ENCODE measurements at regions of chr16 and their contacts with region 1.

Region 1: GRCh38 chr16:66608241-66609138 is 4.0 kb downstream of the CMTM3 start:
- DNase-seq: peak; percentile 74
- ATAC-seq: peak; percentile 76
- H3K4me3 ChIP-seq: peak overlapping the region in 1 of 2 experiments; percentile 7; a peak in 1 of 4 replicates
- H3K27ac ChIP-seq: peak overlapping the region; percentile 54
- H3K4me1 ChIP-seq: peaks cover 24 to 39% of the 10 kb centered on the region in 2 experiments
- H3K27me3 ChIP-seq: no peaks in the 10 kb centered on the region
- CTCF ChIP-seq: peak; percentile 89 to 97 (median 96)
- POLR2A ChIP-seq: no peak
- RAD21 ChIP-seq: peak; percentile 91

Region 2: DNA sequence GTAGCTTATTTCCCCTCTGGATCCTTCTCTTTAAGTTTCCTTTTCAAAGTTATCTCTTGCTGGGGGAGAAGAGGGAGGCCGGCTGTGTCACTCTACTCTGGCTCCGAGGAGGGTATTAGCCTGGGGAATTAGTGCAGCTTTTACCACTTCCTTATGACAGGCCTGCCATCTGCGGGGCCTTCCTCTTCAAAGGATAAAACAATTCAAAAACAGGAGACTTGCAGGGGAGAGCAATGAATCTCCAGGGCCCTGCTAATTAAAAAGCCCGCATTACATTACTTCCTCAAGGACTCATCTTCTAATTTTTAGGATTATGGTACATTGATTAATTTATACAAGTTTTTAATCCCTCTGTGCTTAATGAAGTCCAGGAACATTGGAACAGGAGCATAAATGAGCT is 432.9 kb before region 1 on chr16:
- CTCF ChIA-PET with region 1: no interaction called
- POLR2A ChIA-PET with region 1: no interaction called
- RAD21 ChIA-PET with region 1: no interaction called
- intact Hi-C with region 1: no loop called
- DNase-seq: no peak
- ATAC-seq: no peak
- H3K4me3 ChIP-seq: no peak overlapping the region
- H3K27ac ChIP-seq: no peak overlapping the region
- H3K4me1 ChIP-seq: no peaks in the 10 kb centered on the region
- H3K27me3 ChIP-seq: peaks cover 6% of the 10 kb centered on the region; the same call in 1 of the 2 replicates
- CTCF ChIP-seq: no peak
- POLR2A ChIP-seq: no peak
- RAD21 ChIP-seq: no peak

Region 3: GRCh38 chr16:66521951-66522771 is 86.3 kb before region 1 on chr16:
- CTCF ChIA-PET with region 1: interaction called, 10 read pairs
- POLR2A ChIA-PET with region 1: no interaction called
- RAD21 ChIA-PET with region 1: no interaction called
- intact Hi-C with region 1: no loop called
- DNase-seq: peak; percentile 90
- ATAC-seq: peak; percentile 94
- H3K4me3 ChIP-seq: peak overlapping the region in 1 of 2 experiments; percentile 33; a peak in 1 of 4 replicates
- H3K27ac ChIP-seq: peak overlapping the region; percentile 58
- H3K4me1 ChIP-seq: peaks cover 38 to 46% of the 10 kb centered on the region in 2 experiments
- H3K27me3 ChIP-seq: no peaks in the 10 kb centered on the region
- CTCF ChIP-seq: no peak
- POLR2A ChIP-seq: no peak
- RAD21 ChIP-seq: no peak

Region 4: DNA sequence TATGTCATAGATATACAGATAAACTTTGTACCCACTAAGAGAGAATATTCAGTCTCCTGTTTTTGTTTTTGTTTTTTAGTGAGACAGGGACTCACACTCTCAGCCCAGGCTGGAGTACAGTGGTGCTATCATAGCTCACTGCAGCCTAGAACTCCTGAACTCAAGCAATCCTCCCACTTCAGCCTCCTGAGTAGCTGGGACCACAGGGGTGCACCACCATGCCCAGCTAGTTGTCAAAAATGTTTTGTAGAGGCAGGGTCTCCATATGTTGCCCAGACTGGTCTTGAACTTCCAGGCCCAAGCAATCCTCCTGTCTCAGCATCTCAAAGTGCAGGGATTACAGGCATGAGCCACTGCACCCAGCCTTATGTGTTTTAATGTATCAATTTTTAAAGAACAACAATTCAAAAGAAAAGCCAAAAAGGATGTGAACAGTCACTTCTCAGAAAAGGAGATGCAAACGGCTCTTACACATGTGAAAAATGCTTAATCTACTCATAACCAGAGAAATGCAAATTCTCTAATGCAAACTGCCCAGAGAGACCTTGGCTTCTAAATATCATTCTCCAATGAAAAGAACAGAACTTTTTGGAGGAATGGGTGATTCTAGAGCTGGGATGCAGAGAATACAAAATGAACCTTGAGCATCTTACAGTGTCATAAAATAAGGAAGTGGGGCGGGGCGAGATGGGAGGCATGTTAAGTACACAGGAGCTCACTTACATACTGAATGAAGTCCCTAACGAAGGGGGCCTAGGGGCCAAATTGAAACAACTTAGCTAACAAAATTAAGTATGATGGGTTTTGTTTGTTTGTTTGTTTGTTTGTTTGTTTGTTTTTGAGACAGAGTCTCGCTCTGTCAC is 11.3 kb before region 1 on chr16:
- CTCF ChIA-PET with region 1: interaction called, 11 read pairs
- POLR2A ChIA-PET with region 1: no interaction called
- RAD21 ChIA-PET with region 1: no interaction called
- intact Hi-C with region 1: no loop called
- DNase-seq: no peak
- ATAC-seq: no peak
- H3K4me3 ChIP-seq: no peak overlapping the region
- H3K27ac ChIP-seq: no peak overlapping the region
- H3K4me1 ChIP-seq: no peaks in the 10 kb centered on the region
- H3K27me3 ChIP-seq: no peaks in the 10 kb centered on the region
- CTCF ChIP-seq: no peak
- POLR2A ChIP-seq: no peak
- RAD21 ChIP-seq: no peak

Region 5: DNA sequence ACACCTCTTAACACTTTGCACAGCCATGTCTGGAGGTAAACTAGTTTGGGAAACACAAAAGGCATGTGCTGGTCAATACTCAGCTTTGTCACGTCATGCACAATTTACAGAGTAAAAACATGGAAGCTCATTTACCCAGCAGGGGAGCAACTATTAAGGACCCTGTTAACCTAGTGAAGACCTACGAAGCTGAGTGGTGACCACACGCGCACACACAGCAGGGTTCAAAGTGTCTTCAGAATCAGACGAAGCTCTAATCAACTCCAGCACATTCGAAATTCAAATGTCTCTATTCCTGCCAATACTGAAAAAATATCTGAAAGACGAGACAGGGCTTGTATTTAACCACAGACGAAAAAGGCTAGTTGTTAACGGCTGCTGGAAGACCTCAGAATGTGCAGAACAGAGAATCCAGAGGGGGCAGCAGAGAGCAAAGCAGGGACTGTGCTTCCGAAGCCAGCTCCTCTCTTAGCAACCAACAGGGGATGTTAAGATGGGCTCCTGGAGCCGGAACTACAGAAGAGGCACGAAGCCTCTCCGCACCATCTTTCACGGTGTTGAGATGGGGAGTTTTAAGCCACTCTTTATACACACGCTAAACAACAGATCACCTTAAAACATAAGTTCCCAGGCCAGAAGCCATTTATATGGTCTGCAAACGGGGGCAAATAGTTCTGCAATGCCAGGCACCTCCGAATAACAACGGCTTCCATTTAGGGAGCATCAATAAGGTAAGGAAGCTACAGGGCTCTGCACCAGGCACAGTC is 42.4 kb after region 1 on chr16:
- CTCF ChIA-PET with region 1: interaction called, 11 read pairs
- POLR2A ChIA-PET with region 1: no interaction called
- RAD21 ChIA-PET with region 1: no interaction called
- intact Hi-C with region 1: no loop called
- DNase-seq: peak; percentile 60
- ATAC-seq: peak; percentile 100
- H3K4me3 ChIP-seq: no peak overlapping the region
- H3K27ac ChIP-seq: no peak overlapping the region
- H3K4me1 ChIP-seq: peaks cover 0 to 8% of the 10 kb centered on the region in 2 experiments; a peak in 3 of 4 replicates
- H3K27me3 ChIP-seq: no peaks in the 10 kb centered on the region
- CTCF ChIP-seq: peak; percentile 65 to 94 (median 89); a peak in 5 of 6 replicates
- POLR2A ChIP-seq: no peak
- RAD21 ChIP-seq: peak; percentile 57

Region 6: DNA sequence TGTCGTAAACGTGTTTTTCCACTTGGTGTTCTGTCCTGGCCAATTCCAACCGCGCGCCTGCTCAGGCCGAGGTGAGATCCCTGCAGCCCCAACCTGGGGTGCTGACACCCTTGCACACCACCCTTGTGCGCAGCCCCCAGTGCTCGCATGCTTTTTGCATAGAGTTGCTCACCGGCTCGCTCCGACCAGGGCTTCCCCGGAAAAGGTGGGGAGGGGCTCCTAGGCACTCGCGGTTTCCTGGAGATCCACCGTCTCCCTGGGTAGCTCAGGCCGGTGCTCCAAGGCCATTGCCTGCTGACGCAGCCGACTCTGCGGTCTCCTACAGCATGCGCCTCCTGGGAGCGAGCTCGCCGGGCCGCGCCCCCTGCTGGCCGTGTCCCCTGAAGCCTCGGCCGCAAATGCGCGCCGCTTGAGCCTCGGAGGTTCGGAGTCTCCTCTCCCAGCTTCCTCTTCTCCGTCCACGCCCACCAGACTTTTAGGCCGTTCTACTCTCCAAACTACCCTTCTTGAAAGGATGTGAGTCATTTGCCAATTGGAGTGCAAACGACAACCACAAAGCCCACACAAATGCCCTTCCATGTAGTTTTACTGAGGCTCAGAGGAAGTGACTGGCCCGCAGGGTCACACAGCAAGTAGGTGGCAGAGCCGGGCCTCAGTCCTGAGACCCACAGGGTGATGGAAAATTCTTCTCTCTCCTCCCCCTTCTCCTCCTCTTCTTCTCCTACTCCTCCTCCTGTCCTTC is 264.6 kb after region 1 on chr16:
- CTCF ChIA-PET with region 1: interaction called, 30 read pairs
- POLR2A ChIA-PET with region 1: no interaction called
- RAD21 ChIA-PET with region 1: interaction called in 1 of 2 experiments, 12 read pairs
- intact Hi-C with region 1: no loop called
- DNase-seq: peak; percentile 89
- ATAC-seq: peak; percentile 95
- H3K4me3 ChIP-seq: peak overlapping the region; percentile 42 to 57
- H3K27ac ChIP-seq: peak overlapping the region; percentile 65
- H3K4me1 ChIP-seq: peaks cover 12 to 27% of the 10 kb centered on the region in 2 experiments
- H3K27me3 ChIP-seq: no peaks in the 10 kb centered on the region
- CTCF ChIP-seq: peak; percentile 74 to 95 (median 91)
- POLR2A ChIP-seq: no peak
- RAD21 ChIP-seq: no peak

Region 7: GRCh38 chr16:66947302-66948065 is 339.0 kb after region 1 on chr16:
- CTCF ChIA-PET with region 1: no interaction called
- POLR2A ChIA-PET with region 1: no interaction called
- RAD21 ChIA-PET with region 1: no interaction called
- intact Hi-C with region 1: no loop called
- DNase-seq: peak; percentile 81
- ATAC-seq: peak; percentile 91
- H3K4me3 ChIP-seq: no peak overlapping the region; a peak in 1 of 4 replicates
- H3K27ac ChIP-seq: no peak overlapping the region
- H3K4me1 ChIP-seq: peaks cover 0 to 9% of the 10 kb centered on the region in 2 experiments; a peak in 2 of 4 replicates
- H3K27me3 ChIP-seq: no peaks in the 10 kb centered on the region
- CTCF ChIP-seq: peak; percentile 85 to 92 (median 85)
- POLR2A ChIP-seq: no peak
- RAD21 ChIP-seq: peak; percentile 86

Measured in HCT116 (cell line).